Uterus (tissue), 4 donors: ENCODE measurements at regions of chr12 and their contacts with region 1.

Region 1: DNA sequence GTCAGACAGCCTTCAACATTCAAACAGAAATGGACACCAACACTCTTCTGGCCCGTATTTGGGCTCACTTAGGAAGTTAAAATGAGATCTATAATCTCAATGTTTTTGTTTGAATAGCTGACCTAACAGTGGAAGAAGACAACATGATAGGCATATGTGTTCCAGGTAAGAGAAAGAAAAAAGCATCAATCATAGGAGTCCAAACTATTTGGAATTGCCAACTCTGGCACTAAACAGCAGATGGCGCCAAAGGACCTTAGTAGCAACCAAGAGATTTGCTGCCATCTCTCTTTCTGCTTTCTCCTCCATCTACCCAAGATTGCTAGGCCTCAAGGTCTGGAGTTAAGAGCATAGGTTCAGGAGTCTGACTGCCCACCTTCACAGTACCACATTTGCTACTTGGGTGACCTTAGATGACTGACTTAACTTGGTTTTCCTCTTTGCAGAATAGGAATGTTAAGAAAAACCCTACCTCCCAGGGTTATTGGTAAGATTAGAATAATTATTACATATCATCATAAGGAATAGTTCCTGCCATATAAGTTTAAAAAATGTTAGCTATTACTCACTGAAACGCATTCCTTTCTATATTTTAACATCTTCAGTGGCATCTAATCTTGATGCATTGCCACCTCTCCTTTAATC is 30.2 kb downstream of the PEX5 start:
- DNase-seq: peak; percentile 42 to 61
- H3K4me3 ChIP-seq: no peak overlapping the region
- H3K27ac ChIP-seq: no peak overlapping the region
- H3K4me1 ChIP-seq: no peaks in the 10 kb centered on the region
- H3K27me3 ChIP-seq: no peaks in the 10 kb centered on the region
- CTCF ChIP-seq: peak; percentile 71 to 84 (median 77)
- POLR2A ChIP-seq: no peak

Region 2: DNA sequence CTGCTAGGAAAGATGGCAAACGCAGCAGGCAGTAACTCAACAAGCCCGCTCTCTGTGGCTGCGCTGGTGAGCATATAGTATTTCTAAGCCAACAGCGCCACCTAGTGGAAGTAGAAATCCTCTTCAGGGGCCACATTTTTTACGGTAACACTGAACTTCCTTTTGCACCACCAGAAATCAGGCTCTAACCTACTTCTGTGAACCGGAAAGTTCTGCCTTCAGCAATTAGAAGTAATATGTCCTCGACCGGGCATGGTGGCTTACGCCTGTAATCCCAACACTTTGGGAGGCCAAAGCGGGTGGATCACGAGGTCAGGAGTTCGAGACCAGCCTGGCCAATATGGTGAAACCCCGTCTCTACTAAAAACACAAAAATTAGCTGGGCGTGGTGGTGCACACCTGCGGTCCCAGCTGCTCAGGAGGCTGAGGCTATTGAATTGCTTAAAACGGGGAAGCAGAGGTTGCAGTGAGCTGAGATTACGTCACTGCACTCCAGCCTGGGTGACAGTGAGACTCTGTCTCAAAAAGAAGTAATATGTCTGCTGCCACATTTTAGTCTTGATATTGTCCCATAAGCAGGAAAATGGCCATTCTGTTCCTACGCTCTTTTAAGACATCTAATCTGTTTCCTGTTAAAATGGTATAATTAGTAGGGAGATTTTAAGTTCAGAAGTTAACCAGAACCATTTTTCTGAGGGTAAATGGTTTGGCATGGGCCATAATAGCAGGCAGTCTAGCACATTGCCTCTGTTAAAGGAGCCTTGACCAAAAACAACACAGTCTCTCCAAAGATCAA is 419.2 kb after region 1 on chr12:
- intact Hi-C with region 1: loop called (anchors 10 kb)
- DNase-seq: peak; percentile 55 to 69
- H3K4me3 ChIP-seq: no peak overlapping the region
- H3K27ac ChIP-seq: no peak overlapping the region
- H3K4me1 ChIP-seq: no peaks in the 10 kb centered on the region
- H3K27me3 ChIP-seq: no peaks in the 10 kb centered on the region
- CTCF ChIP-seq: peak; percentile 83 to 89 (median 86)
- POLR2A ChIP-seq: peak in 1 of 2 donors; percentile 23